Right ventricle myocardium inferior (tissue), 1 donor: ENCODE measurements at regions of chr18 and their contacts with region 1.

Region 1: GRCh38 chr18:59516356-59517155 is 157.5 kb upstream of the LMAN1 start:
- DNase-seq: no peak
- ATAC-seq: peak; percentile 87

Region 2: DNA sequence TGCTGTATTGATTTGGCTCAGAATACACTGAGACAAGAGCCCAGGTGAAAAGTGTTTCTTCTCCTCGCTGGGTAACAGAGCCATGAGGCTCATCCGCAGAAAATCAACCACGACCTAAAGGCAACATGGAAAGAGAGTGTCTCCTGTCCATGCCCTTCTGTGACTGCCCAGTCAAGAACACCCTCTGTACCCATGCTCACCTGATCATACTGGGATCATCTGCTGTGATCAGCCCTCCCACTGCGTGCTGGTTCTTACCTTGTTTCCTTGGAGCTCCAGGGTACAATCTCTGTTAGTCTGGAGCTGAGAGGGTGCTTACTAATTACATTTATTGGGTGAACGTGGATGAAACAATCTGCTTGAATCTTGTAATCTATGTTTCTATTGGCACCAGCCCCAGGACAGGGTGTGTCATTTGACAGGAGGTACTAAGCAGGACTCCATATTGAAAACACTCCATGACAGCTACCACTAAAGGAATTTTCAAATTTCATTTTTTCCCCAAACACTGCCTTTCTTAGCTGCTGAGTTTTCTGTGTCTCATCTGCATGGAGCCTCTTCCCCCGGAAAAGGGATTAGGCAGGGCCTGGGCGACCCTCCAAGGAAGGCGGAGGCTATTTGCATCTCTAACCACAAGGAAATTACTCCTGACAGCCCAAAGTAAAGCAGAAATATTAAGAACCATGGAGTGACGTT is 336.3 kb before region 1 on chr18:
- intact Hi-C with region 1: no loop called
- DNase-seq: no peak
- ATAC-seq: no peak

Region 3: GRCh38 chr18:59547581-59548182 is 31.1 kb after region 1 on chr18:
- intact Hi-C with region 1: loop called (anchors 2 kb)
- DNase-seq: no peak
- ATAC-seq: peak; percentile 65